ENCODE measurements at regions of chr5 and their contacts with region 1.

Region 1: GRCh38 chr5:32585446-32586275 is at the start of gene SUB1:
- DNase-seq: peak; percentile 97 to 98
- ATAC-seq: peak; percentile 95
- H3K4me3 ChIP-seq: peak within 1 kb of the TSS; percentile 95
- H3K27ac ChIP-seq: peak within 1 kb of the TSS; percentile 96 to 99
- H3K4me1 ChIP-seq: no peaks in the 10 kb centered on the region
- H3K27me3 ChIP-seq: no peaks in the 10 kb centered on the region
- total RNA-seq, gene SUB1: 172 to 192 TPM

Region 2: DNA sequence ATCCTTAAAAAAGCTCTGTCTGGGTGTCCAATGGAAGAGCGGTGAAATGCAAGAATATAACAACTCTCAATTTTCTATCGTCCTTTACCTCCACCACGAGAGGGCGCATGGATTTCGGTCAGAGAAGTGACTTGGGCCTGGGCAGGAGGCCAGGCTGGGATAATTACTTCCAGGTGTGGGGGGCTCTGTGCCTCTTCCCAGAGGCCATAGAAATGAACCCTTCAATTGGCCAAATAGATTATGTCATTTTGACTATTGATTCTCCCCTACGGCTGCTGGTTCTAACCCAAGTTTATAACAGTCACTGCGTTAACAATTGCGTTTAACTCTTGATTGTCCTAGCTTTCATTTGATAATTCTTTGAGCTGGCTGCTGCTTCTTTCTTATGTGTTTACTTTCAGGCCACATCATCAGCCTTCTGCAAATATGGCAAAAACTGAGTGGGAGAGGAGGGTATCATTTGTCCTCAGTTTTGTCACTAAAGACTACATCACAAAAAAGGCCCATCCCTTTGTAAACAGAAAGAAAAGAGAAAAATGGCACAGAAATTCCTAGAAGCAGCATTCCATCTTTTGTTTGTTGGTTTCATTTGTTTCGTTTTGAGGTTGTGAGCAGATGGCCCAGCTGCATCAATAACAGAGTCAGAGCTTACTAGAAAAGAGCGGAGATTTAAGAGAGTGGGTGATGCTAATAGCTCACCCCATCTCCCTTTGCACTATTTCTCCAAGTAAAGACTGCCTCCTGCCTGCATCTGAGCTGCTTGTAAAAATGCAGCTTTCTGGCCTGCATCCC is 95.7 kb before region 1 on chr5:
- intact Hi-C with region 1: loop called (anchors 1 to 2 kb)
- DNase-seq: peak; percentile 82 to 92
- ATAC-seq: peak; percentile 83
- H3K4me3 ChIP-seq: no peak overlapping the region
- H3K27ac ChIP-seq: no peak overlapping the region
- H3K4me1 ChIP-seq: no peaks in the 10 kb centered on the region
- H3K27me3 ChIP-seq: no peaks in the 10 kb centered on the region

Region 3: GRCh38 chr5:32534041-32534440 is 51.6 kb before region 1 on chr5:
- intact Hi-C with region 1: loop called in 1 of 2 experiments (anchors 1 kb)
- DNase-seq: no peak
- ATAC-seq: peak; percentile 37
- H3K4me3 ChIP-seq: no peak overlapping the region
- H3K27ac ChIP-seq: no peak overlapping the region
- H3K4me1 ChIP-seq: peaks cover 0 to 6% of the 10 kb centered on the region in 2 donors
- H3K27me3 ChIP-seq: no peaks in the 10 kb centered on the region

Measured in aorta (tissue), 5 donors.